GM12878 (cell line): ENCODE measurements at regions of chr17 and their contacts with region 1.

Region 1: GRCh38 chr17:48084932-48085444 is 16.3 kb downstream of the CBX1 start:
- DNase-seq: no peak
- ATAC-seq: no peak
- H3K4me3 ChIP-seq: no peak overlapping the region
- H3K27ac ChIP-seq: no peak overlapping the region
- H3K4me1 ChIP-seq: no peaks in the 10 kb centered on the region
- H3K27me3 ChIP-seq: no peaks in the 10 kb centered on the region
- CTCF ChIP-seq: no peak
- EP300 ChIP-seq: no peak
- POLR2A ChIP-seq: no peak
- RAD21 ChIP-seq: no peak

Region 2: DNA sequence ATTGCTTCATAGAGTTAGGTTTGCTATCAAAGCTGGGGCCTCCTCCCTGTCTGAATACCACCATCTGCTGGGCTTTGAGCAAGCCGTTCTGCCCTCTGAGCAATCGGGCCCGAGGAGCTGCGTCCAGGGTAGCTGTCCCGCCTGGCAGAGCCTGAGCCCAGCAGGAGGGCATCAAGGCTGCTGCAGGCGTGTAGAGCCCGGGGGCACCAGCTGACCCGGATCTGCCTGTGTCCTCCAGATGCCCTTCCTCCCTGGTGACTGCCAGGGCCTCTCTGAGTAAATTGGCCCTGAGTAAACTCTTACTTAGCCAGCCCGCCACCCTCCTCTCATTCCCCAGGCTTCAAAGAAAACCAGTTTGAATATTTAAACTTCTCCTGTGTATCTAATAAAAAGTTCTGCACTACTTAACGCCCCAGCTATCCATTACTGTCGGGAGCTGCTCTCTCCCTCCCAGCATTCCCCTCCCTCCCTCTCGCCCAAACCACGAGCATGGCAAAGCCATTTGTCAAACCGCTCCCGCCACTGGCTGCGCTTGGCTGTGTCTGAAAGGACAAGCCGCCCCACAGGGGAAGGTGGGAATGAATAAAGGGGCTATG is 97.7 kb before region 1 on chr17:
- CTCF ChIA-PET with region 1: no interaction called
- POLR2A ChIA-PET with region 1: no interaction called
- RAD21 ChIA-PET with region 1: no interaction called
- SMC1A ChIA-PET with region 1: no interaction called
- in situ Hi-C with region 1: no loop called
- intact Hi-C with region 1: no loop called
- DNase-seq: no peak
- ATAC-seq: no peak
- H3K4me3 ChIP-seq: no peak overlapping the region
- H3K27ac ChIP-seq: no peak overlapping the region
- H3K4me1 ChIP-seq: peaks cover 13% of the 10 kb centered on the region
- H3K27me3 ChIP-seq: no peaks in the 10 kb centered on the region
- CTCF ChIP-seq: no peak
- EP300 ChIP-seq: no peak
- POLR2A ChIP-seq: no peak
- RAD21 ChIP-seq: no peak

Region 3: DNA sequence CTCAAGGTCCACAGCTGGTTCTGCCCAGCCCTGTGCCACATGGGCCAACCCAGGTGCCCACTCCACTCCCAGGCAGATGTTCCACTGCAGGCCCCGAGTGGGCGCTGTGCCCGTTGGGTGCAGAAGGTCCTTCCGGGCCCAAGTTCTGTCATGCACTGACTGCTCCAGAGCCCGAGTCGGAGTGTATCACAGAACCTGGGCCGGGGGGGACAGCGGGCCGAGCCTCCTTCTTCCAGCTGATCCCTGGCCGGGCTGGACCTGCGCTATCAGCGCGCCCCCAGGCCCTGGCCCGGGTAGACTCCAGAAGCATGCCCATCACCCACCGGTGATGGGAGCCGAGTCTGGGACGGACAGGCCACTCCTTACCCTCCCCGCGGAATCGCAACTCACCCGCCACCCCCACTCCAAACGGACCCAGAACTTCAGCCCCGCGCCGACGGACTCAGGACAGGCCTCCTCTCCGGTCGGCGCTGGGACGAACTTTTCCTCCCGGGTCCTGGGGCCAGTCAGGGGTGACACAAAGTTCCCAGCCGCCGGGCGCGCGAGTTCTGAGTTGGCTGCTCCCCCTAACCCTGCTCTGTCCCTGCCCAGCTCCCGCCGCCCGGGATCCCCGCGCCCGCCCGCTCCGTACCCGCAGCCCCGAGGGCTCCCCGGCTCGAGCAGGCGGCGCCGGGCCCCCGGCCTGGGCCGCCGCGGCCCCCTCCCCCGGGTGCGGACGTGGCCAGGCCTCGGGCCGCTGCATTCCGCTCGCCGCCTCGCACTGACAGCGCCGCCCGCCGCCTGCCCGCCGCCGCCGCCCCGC is 47.8 kb before region 1 on chr17 and contains the start of gene COPZ2:
- CTCF ChIA-PET with region 1: interaction called, 31 read pairs
- POLR2A ChIA-PET with region 1: no interaction called
- RAD21 ChIA-PET with region 1: interaction called, 6 read pairs
- SMC1A ChIA-PET with region 1: interaction called, 9 read pairs
- in situ Hi-C with region 1: no loop called
- intact Hi-C with region 1: no loop called
- DNase-seq: no peak
- ATAC-seq: peak; percentile 93
- H3K4me3 ChIP-seq: peak within 1 kb of the TSS; percentile 73
- H3K27ac ChIP-seq: no peak within 1 kb of the TSS
- H3K4me1 ChIP-seq: peaks cover 9% of the 10 kb centered on the region
- H3K27me3 ChIP-seq: peaks cover 3 to 4% of the 10 kb centered on the region in 2 experiments; a peak in 3 of 4 replicates
- CTCF ChIP-seq: peak; percentile 67 to 91 (median 73)
- EP300 ChIP-seq: no peak
- POLR2A ChIP-seq: no peak
- RAD21 ChIP-seq: peak; percentile 20; the same call in 1 of the 2 replicates
- polyA plus RNA-seq, gene COPZ2: 2.5 to 2.9 TPM

Region 4: GRCh38 chr17:48068491-48068961 is 16.5 kb before region 1 on chr17:
- CTCF ChIA-PET with region 1: interaction called, 32 read pairs
- POLR2A ChIA-PET with region 1: no interaction called
- RAD21 ChIA-PET with region 1: no interaction called
- SMC1A ChIA-PET with region 1: interaction called, 6 read pairs
- in situ Hi-C with region 1: no loop called
- intact Hi-C with region 1: no loop called
- DNase-seq: no peak
- ATAC-seq: peak; percentile 84
- H3K4me3 ChIP-seq: no peak overlapping the region
- H3K27ac ChIP-seq: no peak overlapping the region
- H3K4me1 ChIP-seq: no peaks in the 10 kb centered on the region
- H3K27me3 ChIP-seq: no peaks in the 10 kb centered on the region
- CTCF ChIP-seq: peak; percentile 15 to 43 (median 39); a peak in 3 of 6 replicates
- EP300 ChIP-seq: no peak
- POLR2A ChIP-seq: 0 out of 2 replicates have a peak, but pooled peaks have one; percentile 18
- RAD21 ChIP-seq: no peak

Region 5: DNA sequence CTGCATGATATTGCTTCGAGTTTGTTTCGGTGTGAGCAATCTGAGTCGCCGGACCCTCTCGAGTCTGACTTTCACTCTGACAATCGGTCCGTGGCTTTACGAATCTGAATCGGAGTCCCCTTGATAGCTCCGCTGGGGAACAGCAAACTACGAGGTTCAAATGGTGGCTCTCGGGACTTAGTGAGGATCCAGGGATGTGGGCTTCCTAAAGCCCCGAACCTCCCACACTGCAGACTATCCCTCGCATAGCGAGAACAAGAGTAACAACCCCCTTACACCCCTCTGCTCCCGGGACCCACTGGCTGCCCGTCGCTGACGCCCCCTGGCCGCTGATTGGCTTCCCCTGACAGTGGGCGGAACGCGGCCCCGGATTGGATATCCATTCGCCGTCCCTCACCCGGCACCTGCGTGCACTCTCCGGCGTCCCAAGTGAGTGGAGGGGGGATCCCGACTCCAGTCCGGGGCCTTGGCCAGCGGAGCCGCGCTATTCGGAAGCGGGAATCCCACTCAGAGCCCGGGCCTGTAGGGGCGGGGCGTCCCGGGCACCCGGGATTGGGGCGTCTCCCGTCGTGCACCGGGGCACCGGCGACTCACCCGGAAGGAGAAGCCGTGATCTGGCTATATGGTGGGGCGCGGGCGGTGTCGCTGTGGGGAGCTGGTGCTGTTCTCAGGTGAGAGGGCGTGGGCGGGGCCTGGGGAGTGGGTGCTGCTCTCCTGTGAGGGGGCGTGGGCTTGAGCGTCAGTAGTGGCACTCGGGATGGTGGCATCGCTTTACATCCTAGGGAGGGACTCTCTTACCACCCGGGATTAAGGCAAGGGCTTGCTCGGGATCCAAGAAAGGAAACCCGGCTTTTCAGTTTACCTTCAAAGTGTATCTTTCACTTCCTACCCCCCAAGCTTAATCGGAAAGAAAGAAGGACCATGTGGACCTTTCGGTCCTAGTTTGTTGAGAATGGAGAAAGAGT is 22.5 kb after region 1 on chr17 and contains the start of gene SNX11:
- CTCF ChIA-PET with region 1: interaction called, 525 read pairs
- POLR2A ChIA-PET with region 1: interaction called, 10 read pairs
- RAD21 ChIA-PET with region 1: interaction called, 18 read pairs
- SMC1A ChIA-PET with region 1: interaction called, 38 read pairs
- in situ Hi-C with region 1: no loop called
- intact Hi-C with region 1: no loop called
- DNase-seq: no peak
- ATAC-seq: peak; percentile 88
- H3K4me3 ChIP-seq: peak within 1 kb of the TSS; percentile 97
- H3K27ac ChIP-seq: peak within 1 kb of the TSS; percentile 80
- H3K4me1 ChIP-seq: peaks cover 6% of the 10 kb centered on the region
- H3K27me3 ChIP-seq: no peaks in the 10 kb centered on the region
- CTCF ChIP-seq: peak in 2 of 3 experiments; percentile 7 to 20; a peak in 1 of 6 replicates
- EP300 ChIP-seq: no peak
- POLR2A ChIP-seq: peak; percentile 91
- RAD21 ChIP-seq: no peak
- polyA plus RNA-seq, gene SNX11: 61.3 to 75.6 TPM

Region 6: GRCh38 chr17:48123111-48123510 is 38.1 kb after region 1 on chr17:
- CTCF ChIA-PET with region 1: interaction called, 525 read pairs
- POLR2A ChIA-PET with region 1: interaction called, 3 read pairs
- RAD21 ChIA-PET with region 1: interaction called, 25 read pairs
- SMC1A ChIA-PET with region 1: interaction called, 205 read pairs
- in situ Hi-C with region 1: no loop called
- intact Hi-C with region 1: no loop called
- DNase-seq: no peak
- ATAC-seq: no peak
- H3K4me3 ChIP-seq: no peak overlapping the region
- H3K27ac ChIP-seq: no peak overlapping the region
- H3K4me1 ChIP-seq: no peaks in the 10 kb centered on the region
- H3K27me3 ChIP-seq: no peaks in the 10 kb centered on the region
- CTCF ChIP-seq: no peak
- EP300 ChIP-seq: no peak
- POLR2A ChIP-seq: no peak
- RAD21 ChIP-seq: no peak

Region 7: DNA sequence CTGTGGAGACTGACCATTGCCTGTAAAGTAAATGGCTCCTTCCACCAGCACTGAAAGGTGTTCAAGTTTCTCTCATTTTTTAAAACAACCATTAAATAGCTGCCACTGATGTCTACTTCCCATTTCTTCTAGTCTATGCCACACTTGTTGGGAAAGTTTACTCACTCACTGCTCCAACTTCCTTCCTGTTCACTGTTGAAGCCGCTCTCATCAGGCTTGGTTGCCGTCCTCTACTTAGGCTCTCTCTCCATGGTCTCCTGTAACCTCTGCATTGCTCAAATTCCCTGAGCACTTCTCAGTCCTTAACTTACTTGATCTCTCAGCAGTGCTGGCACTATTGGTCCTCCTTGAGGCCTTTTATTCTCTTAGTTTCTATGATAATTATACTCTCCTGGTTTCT is 55.0 kb after region 1 on chr17:
- CTCF ChIA-PET with region 1: interaction called, 223 read pairs
- POLR2A ChIA-PET with region 1: no interaction called
- RAD21 ChIA-PET with region 1: interaction called, 4 read pairs
- SMC1A ChIA-PET with region 1: interaction called, 205 read pairs
- in situ Hi-C with region 1: no loop called
- intact Hi-C with region 1: no loop called
- DNase-seq: no peak
- ATAC-seq: no peak
- H3K4me3 ChIP-seq: no peak overlapping the region
- H3K27ac ChIP-seq: no peak overlapping the region
- H3K4me1 ChIP-seq: peaks cover 17% of the 10 kb centered on the region
- H3K27me3 ChIP-seq: no peaks in the 10 kb centered on the region
- CTCF ChIP-seq: no peak
- EP300 ChIP-seq: no peak
- POLR2A ChIP-seq: no peak
- RAD21 ChIP-seq: no peak

Region 8: DNA sequence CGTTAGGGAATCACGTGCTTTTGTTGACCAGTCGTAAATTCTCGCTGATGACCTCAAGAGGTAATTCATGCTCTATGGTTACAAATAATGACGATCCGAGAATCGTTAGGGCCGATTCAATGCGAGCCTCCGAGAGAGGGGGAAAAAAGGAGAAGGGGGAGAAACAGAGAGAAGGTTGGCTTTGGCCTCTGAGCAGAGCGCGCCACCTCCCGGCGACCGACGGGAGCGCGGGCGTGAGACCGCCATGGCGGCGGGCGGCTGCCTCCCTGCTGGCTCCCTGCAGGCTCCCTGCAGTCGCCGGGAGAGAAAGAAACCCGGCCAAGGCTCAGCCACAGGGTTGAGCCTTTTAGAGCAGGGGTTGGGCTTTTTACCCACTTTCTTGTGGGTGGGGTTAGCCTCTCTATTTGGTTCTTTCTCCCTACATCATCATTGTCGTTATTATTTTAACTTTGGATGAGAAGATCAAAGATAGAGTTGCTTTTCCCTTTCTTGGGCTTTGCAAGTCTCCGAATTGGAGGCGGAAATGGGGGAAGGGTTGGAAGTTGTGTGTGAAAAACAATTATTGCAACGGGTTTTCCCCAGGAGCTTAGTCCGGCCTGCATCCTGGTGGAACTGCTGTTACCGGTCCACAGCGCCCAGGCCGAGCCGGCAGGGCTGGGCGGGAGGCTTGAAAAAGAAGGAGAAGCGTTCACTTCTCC is 509.0 kb after region 1 on chr17:
- CTCF ChIA-PET with region 1: interaction called, 28 read pairs
- POLR2A ChIA-PET with region 1: interaction called, 3 read pairs
- RAD21 ChIA-PET with region 1: interaction called, 8 read pairs
- SMC1A ChIA-PET with region 1: interaction called, 4 read pairs
- in situ Hi-C with region 1: no loop called
- intact Hi-C with region 1: no loop called
- DNase-seq: no peak
- ATAC-seq: peak; percentile 75
- H3K4me3 ChIP-seq: no peak overlapping the region; the same call in 1 of the 2 replicates
- H3K27ac ChIP-seq: no peak overlapping the region
- H3K4me1 ChIP-seq: peaks cover 10% of the 10 kb centered on the region
- H3K27me3 ChIP-seq: peaks cover 5 to 33% of the 10 kb centered on the region in 2 experiments
- CTCF ChIP-seq: peak; percentile 91 to 97 (median 94)
- EP300 ChIP-seq: no peak
- POLR2A ChIP-seq: no peak
- RAD21 ChIP-seq: peak; percentile 80